ENCODE measurements at regions of chr11 and their contacts with region 1.

Region 1: DNA sequence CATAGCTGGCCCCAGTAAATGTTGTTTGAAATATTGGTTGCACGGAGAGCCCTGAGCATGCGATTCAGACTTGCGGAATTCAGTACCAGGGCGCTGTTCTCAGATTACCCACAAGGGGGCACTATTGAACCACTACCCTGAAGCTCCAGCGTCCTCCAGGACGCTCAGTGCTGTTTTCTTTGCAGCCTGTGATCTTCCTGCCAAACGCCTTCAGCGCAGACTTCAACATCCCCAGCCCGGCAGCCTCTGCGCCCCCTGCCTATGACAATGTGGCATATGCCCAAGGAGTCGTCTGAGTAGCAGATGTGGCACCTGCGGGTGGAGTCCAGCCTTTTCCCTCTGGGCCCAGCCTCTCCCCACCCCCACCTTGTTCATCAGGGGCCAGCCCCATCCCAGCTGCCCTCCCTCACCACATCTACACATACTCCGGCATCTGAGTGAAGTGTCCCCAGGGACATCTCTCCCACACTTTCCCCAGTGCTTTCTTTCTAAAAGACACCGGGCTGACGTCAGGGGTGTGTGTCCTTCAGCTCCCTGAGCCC is 9.6 kb upstream of the MS4A10 start:
- H3K4me3 ChIP-seq: no peak overlapping the region
- H3K27ac ChIP-seq: no peak overlapping the region
- H3K4me1 ChIP-seq: no peaks in the 10 kb centered on the region
- CTCF ChIP-seq: peak; percentile 86

Region 2: DNA sequence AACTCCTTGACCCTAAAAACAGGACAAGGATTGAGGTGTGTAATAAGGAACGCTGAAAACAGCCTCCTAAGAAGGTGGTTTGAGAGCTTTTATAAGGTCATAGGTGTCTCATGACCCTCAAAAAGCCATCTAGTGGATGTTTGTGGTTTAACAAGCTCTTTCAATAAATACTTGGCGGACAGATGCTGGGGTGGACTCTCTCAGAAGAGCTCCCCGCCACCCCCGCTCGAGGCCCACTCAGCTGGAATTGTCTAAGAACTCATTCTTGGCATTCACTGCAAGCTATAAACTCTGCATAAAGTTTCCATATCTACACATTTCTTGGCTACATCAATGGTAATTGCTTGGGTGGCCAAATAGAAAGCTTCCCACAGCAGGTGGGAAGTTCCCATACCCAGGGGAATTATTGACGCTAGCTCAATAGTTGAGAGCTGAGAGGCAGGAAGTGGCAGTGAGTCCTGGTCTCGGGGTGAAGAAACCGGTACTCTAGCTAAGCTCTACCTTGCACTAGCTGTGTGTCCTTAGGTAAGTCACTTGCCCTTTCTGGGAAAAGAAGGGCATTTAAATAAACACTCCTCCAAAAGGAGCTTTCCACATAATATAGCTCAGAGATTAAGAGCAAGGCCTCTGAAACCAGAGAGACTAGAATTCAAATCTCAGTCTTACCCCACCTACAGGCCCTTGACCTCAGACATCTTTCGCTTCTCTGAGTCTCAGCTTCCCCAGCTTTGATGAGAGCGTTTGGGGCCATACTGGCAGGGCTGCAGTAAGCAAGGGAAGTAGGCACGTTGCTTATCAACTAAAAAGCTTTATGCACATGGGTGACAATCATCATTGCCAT is 12.4 kb before region 1 on chr11:
- CTCF ChIA-PET with region 1: interaction called, 34 read pairs
- POLR2A ChIA-PET with region 1: interaction called, 3 read pairs
- H3K4me3 ChIP-seq: no peak overlapping the region
- H3K27ac ChIP-seq: no peak overlapping the region
- H3K4me1 ChIP-seq: no peaks in the 10 kb centered on the region
- CTCF ChIP-seq: no peak

Region 3: DNA sequence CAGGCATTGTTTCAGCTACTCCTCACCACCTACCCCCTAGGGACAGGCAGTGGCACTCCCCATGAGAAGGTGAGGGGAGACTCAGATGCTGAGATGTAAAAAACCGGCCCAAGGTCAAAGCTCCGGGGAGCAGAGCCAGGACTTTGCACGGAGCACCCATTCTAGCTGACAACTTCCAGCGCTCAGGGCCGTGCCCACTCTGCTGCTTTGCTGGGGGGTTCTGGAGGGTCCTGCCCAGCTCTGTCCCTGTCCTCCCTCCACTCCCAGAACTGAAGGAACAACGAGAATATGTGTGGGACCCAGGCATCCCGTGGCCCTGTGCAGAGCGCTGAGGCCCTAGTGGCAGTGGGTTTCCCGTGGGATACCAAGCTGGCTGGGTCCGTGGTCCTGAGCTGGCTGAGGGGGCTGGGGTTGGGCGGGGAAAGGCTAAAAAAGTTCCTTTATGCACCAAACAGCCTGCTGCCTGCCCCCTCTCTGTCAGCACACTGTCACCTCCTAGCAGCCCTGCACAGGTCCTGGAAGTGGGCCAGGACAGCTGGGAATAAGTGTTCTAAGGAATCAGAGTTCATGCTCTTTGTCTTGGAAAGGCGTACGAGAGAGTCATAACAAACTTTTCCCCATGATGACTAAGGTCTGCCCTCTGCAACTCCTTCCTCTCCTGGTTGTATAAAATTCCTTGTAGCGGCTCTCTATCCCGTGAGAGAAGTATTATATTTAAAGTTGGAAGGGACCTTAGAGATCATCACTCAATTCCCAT is 11.5 kb after region 1 on chr11:
- CTCF ChIA-PET with region 1: interaction called, 18 read pairs
- POLR2A ChIA-PET with region 1: no interaction called
- H3K4me3 ChIP-seq: no peak overlapping the region
- H3K27ac ChIP-seq: no peak overlapping the region
- H3K4me1 ChIP-seq: no peaks in the 10 kb centered on the region
- CTCF ChIP-seq: no peak

Region 4: DNA sequence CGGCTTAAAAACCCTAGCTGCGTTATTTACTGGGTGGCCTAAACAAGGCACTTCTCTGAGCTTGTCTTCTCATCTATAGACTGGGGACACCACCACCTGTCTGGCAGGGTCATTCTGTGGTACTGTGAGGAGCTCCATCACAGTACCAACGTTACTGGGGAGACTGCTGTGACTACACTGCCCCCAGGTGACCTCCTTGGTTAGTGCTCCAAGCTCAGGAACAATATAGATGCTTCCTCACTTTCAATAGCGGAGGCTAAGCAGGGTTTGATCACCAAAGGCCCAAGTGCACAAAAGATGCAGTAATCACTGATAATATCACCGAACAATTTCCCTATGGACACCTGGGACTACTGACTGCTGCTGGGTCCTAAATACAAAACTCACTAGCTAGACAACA is 112.1 kb after region 1 on chr11:
- CTCF ChIA-PET with region 1: interaction called, 14 read pairs
- POLR2A ChIA-PET with region 1: interaction called, 4 read pairs
- H3K4me3 ChIP-seq: no peak overlapping the region
- H3K27ac ChIP-seq: no peak overlapping the region
- H3K4me1 ChIP-seq: no peaks in the 10 kb centered on the region
- CTCF ChIP-seq: 0 out of 2 replicates have a peak, but pooled peaks have one; percentile 8

Region 5: GRCh38 chr11:60899046-60899936 is 123.8 kb after region 1 on chr11:
- CTCF ChIA-PET with region 1: interaction called, 20 read pairs
- POLR2A ChIA-PET with region 1: no interaction called
- H3K4me3 ChIP-seq: no peak overlapping the region
- H3K27ac ChIP-seq: no peak overlapping the region
- H3K4me1 ChIP-seq: no peaks in the 10 kb centered on the region
- CTCF ChIP-seq: no peak

Region 6: GRCh38 chr11:61187505-61188130 is 412.1 kb after region 1 on chr11:
- CTCF ChIA-PET with region 1: interaction called, 19 read pairs
- POLR2A ChIA-PET with region 1: no interaction called
- H3K4me3 ChIP-seq: no peak overlapping the region
- H3K27ac ChIP-seq: no peak overlapping the region
- H3K4me1 ChIP-seq: no peaks in the 10 kb centered on the region
- CTCF ChIP-seq: peak; percentile 32; the same call in 1 of the 2 replicates

Measured in HEK293 (cell line).